Activated T-helper 1 cell treated with anti-CD3 and anti-CD28 coated beads, Interleukin-12 subunit alpha, Interleukin-12 subunit beta, Interleukin-2, Interleukin-4 antibody, amounts not matched to agents 30 ng/mL and 10 ng/mL and 1 ng/mL, durations not matched to agents 14 hours and 24 hours and 36 hours (primary cell): ENCODE measurements at regions of chr15 and their contacts with region 1.

Region 1: DNA sequence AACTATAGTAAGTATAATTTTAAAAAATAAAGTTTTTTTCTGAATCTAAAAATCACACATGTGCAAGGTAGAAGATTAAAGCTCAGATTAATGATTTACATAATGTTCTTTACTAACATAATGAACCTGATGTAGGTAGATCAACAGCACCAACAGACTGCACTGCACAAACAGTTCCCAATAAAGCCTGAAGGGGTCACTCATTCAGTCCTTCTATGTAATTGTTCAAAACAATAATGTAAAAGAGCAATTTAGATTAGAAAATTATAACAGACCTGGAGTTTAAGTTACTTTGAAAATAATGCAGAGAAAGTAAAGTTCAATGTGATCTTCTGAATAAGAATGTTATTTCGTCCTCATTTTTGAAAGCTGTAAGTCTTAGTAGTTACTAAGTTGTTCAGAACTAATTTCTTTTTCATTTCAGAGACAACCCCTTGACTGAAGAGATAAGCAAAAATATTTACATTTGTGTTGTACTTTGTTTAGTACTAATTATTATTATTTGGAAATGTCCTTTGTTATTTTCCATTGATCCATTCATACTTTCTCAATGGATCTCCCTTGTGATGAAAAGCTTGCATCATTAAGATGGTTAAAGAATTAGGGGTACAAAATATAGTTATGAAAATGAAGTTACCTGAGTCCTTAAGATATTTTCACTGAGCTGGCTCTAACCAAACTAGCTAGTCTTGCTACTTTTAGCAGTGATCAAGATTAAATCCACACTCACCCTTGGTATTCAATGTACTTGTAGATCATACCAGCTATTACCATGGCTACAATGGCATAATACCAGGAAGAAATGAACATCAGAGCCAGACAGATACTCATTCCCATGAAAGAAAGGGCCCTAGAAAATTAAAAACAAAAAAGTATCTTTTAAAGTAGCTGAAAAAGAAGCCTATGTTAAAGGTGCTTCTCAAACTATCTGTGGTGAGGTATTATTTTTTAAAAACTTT is 16.8 kb downstream of the EMC4 start:
- DNase-seq: no peak
- H3K4me3 Mint-ChIP-seq: no peak overlapping the region
- H3K27ac Mint-ChIP-seq: no peak overlapping the region
- H3K4me1 Mint-ChIP-seq: peaks cover 38% of the 10 kb centered on the region
- H3K27me3 Mint-ChIP-seq: no peaks in the 10 kb centered on the region

Region 2: DNA sequence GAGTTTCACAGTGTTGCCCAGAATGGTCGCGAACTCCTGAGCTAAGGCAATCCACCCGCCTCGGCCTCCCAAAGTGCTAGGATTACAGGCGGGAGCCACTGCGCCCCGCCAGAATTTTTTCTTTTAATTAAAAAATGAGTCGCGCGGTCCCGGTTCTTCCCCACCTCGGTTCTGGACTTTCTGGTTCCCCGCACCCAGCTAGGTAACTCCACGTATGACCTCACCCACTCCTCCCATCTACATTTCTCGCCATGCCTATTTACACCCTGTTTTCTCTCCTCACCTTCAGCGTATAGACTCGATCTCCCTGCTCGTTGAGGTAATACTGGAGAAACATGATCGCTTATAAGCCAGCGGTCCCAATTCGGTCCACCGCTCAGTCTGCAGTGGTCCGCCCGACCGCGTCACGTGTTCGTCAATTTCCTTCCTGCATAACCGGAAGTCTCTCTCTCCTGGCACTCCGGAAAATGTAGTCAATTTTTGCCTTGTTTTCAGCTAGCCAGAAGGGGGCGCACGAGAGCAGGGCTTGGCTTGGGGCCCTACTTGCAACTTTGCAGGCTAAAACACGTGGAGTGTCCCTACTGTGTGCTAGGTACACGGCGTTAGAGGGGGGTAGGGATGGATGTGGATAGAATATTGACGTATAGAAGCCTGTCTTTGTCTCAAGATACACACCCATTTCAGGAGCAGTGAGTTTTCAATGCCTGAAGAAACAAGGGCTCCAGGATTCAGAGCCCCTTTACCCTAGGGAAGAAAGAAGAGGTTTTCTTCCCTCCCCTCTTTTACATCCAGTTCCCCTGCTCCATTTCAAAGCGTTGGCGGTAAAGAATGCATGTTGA is 101.3 kb after region 1 on chr15 and contains the starts of genes NOP10 and NUTM1:
- intact Hi-C with region 1: loop called (anchors 1 kb)
- DNase-seq: peak; percentile 91
- H3K4me3 Mint-ChIP-seq: no peak within 1 kb of the TSS
- H3K27ac Mint-ChIP-seq: peak within 1 kb of the TSS; percentile 88
- H3K4me1 Mint-ChIP-seq: peaks cover 26% of the 10 kb centered on the region
- H3K27me3 Mint-ChIP-seq: no peaks in the 10 kb centered on the region
- total RNA-seq, gene NOP10: 257 and 267 TPM in 2 replicates
- total RNA-seq, gene NUTM1: not detected in 2 replicates